ENCODE measurements at regions of chr7 and their contacts with region 1.

Region 1: GRCh38 chr7:7321720-7322128 is 139.4 kb downstream of the C1GALT1 start:
- DNase-seq: peak; percentile 49
- H3K4me3 Mint-ChIP-seq: no peak overlapping the region
- H3K27ac Mint-ChIP-seq: no peak overlapping the region
- H3K4me1 Mint-ChIP-seq: peaks cover 9% of the 10 kb centered on the region
- H3K27me3 Mint-ChIP-seq: no peaks in the 10 kb centered on the region
- CTCF ChIP-seq: no peak

Region 2: GRCh38 chr7:7416031-7416858 is 94.5 kb after region 1 on chr7:
- CTCF ChIA-PET with region 1: no interaction called
- intact Hi-C with region 1: loop called (anchors 5 kb)
- DNase-seq: peak; percentile 83
- H3K4me3 Mint-ChIP-seq: peak overlapping the region; percentile 7
- H3K27ac Mint-ChIP-seq: peak overlapping the region; percentile 53
- H3K4me1 Mint-ChIP-seq: peaks cover 38% of the 10 kb centered on the region
- H3K27me3 Mint-ChIP-seq: no peaks in the 10 kb centered on the region
- CTCF ChIP-seq: no peak

Region 3: GRCh38 chr7:7474431-7474830 is 152.7 kb after region 1 on chr7:
- CTCF ChIA-PET with region 1: no interaction called
- intact Hi-C with region 1: no loop called
- DNase-seq: no peak
- H3K4me3 Mint-ChIP-seq: no peak overlapping the region
- H3K27ac Mint-ChIP-seq: no peak overlapping the region
- H3K4me1 Mint-ChIP-seq: no peaks in the 10 kb centered on the region
- H3K27me3 Mint-ChIP-seq: no peaks in the 10 kb centered on the region
- CTCF ChIP-seq: no peak